GM18951 (cell line): ENCODE measurements at regions of chr13 and their contacts with region 1.

Region 1: DNA sequence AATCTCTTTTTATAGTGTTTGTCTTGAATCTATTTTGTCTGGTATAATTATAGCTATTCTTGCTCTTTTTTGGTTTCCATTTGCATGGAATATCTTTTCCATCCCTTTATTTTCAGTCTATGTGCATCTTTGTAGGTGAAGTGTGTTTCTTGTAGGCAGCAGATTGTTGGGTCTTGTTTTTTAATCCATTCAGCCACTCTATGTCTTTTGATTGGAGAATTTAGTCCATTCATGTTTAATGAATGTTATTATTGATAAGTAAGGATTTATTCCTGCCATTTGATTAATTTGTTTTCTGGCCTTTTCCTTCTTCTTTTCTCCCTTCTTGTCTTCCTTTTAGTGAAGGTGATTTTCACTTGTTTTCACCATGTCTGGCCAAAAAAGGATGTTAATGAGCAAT is 11.7 kb upstream of the ZDHHC20 start:
- POLR2A ChIP-seq: no peak

Region 2: GRCh38 chr13:21297914-21298831 is 172.6 kb before region 1 on chr13:
- in situ Hi-C with region 1: loop called (anchors 5 kb)
- POLR2A ChIP-seq: peak; percentile 45